Dendritic cell treated with granulocyte-macrophage colony-stimulating factor and Interleukin-4, amounts not matched to agents 40 ng/mL and 50 ng/mL, for 4 days (primary cell): ENCODE measurements at regions of chr2 and their contacts with region 1.

Region 1: GRCh38 chr2:113248997-113249770 is 29.5 kb downstream of the PAX8 start:
- H3K4me3 Mint-ChIP-seq: no peak overlapping the region
- H3K27ac Mint-ChIP-seq: no peak overlapping the region
- H3K4me1 Mint-ChIP-seq: peaks cover 30% of the 10 kb centered on the region
- H3K27me3 Mint-ChIP-seq: no peaks in the 10 kb centered on the region

Region 2: DNA sequence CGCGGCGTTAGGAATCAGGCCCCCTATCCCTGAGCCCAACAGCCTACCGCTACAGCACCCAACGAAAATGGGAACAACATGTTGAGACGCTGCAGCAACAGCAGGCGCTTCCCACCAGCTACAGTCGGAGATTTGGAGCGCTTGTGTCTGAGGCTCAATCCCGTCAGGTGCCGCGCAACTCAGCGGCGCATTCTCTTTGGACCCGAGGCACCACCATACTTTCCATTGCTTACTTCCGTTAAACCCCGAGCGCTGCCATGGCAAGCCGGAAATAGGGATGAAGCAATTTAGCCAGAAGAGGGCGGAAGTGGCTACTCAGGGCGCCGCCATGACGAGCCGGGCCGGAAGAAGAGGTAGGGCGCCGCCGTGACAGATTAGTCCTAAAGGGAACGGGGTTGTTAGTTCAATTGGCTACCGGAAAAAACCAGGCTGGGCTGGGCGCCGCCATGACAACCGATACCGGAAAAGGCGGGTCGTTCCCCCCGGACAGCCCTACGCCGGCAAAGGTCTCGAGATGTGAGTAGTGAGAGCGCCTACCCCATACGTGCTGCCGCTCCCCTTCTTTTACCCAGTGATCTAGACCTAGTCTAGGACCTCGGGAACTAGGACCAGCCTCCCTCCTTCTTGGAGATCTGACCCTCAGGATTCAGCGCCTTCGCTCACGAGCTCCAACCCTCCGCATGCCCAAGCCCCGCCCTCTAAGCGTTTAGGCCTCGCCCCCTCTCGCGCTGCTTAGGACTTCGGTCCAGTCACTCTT is 664.9 kb before region 1 on chr2 and contains the start of gene CHCHD5:
- intact Hi-C with region 1: no loop called
- H3K4me3 Mint-ChIP-seq: peak within 1 kb of the TSS; percentile 92
- H3K27ac Mint-ChIP-seq: peak within 1 kb of the TSS; percentile 95
- H3K4me1 Mint-ChIP-seq: peaks cover 54% of the 10 kb centered on the region
- H3K27me3 Mint-ChIP-seq: no peaks in the 10 kb centered on the region

Region 3: DNA sequence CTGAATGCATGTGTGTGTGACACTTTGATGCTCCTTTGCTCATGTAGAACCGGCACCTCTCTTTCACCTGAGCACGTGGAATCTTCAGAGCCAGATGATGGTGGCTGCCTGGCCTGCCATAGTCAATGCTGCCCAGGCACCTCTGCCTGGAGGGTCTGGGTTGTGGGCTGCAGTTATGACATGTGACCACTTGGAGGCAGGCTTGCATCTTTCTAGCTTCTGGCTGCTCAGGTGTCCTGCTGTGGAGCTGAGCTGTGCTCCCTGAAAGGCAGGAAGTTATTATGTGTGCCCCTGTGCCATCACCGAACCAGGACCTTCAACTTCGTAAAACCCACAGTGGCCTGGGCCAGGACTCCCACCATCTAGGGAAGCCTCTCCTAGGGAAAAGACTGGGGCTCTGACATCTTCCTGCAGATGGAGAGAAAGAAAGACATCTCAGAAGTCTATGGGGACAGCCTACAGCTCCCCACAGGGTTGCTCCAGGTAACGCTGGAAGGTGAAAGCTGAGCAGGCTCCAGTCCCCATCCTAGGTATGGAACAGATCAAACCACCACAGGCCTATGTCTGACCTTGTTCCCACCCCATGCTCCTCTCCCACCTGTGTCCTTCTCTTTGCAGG is 45.2 kb before region 1 on chr2:
- intact Hi-C with region 1: loop called (anchors 1 kb)
- H3K4me3 Mint-ChIP-seq: no peak overlapping the region
- H3K27ac Mint-ChIP-seq: no peak overlapping the region
- H3K4me1 Mint-ChIP-seq: peaks cover 30% of the 10 kb centered on the region
- H3K27me3 Mint-ChIP-seq: peaks cover 2% of the 10 kb centered on the region